Cardiac septum (tissue), 1 donor: ENCODE measurements at regions of chr19 and their contacts with region 1.

Region 1: DNA sequence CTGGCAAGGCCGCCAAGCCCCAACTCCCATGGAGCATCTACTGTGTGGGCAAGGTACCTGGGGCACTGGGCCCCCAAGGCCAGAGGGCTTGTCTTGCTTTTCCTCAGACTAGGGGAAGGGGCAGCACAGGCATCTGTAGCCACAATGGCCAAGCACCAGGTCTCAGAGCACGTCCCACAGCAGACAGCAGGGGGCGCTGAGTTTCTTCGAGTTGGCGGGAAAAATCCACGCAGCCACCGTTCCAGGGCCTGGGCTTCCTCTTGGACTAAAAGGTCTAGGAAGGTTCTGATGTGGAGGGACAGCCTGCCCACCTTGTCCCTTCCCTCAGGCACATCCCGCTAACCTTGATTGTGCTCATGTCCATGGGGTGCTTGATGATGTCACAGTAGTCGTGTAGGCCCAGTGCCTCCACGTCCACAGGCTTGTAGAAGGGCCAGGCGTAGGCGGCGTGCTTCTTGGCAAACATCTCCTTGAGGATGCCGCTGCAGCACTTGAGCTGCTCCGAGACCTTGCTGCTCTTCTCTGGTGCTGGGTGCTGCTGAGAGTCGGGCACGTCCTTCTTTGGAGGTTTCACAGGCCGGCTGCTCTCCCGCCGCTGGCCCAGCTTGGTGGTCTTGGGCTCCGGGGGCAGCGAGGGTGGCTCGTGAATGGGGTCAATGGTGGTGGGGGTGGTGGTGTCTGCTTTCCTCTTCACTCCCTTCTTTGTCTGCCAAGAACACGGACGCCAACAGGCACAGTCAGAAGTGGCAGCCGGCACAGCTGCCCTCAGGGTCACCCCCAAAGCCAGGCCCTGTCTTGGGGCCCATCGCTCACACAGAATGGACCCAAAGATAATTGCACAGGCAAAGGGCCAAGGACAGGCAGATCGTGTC is 32.0 kb upstream of the EPHX3 start:
- DNase-seq: peak; percentile 87

Region 2: GRCh38 chr19:15379083-15379995 is 115.0 kb after region 1 on chr19 and contains the start of gene AKAP8:
- intact Hi-C with region 1: loop called (anchors 2 kb)
- DNase-seq: peak; percentile 99
- total RNA-seq, gene AKAP8: 19.2 TPM